Panc1 (cell line): ENCODE measurements at regions of chr6 and their contacts with region 1.

Region 1: DNA sequence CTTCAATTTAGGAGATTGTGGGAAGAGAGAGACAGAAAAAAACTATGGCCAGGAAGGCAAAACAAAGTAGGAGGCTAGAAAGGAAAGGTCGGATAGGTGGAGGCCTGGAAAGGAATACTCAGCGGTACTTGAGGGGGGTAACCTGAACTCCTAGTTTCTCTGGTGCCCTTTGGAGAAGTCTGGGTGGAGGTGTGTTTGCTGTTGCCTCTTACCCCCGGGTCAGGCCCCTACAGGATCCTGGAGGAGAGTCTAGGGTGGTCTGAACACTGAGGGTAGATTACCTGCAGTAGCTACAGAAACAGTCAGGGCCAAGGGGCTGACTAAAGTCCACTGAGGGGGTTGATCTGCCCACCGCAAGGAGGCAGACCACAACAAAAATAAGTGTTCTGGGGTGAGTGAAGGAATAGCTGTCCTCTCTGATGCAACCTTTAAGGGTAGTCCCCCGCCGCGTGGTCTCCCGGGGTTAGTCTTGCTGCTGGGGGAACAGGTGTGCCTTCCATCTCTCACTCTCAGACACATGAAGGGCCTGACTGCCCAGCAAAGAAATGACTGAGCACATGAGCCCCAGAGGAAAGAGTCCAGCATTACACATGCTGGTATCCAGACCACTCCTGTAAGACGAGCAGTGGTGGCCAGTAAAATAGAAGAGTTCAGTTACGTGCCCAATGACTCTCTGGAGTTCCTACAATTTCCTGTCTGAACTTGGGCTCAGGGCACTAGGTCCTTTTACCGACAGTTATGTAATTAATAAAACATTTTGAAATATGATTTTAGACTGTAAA is 59.5 kb downstream of the MTHFD1L start:
- DNase-seq: no peak
- ATAC-seq: no peak; the same call in 1 of the 2 replicates
- H3K4me3 ChIP-seq: no peak overlapping the region
- H3K27ac ChIP-seq: no peak overlapping the region
- H3K4me1 ChIP-seq: no peaks in the 10 kb centered on the region
- H3K27me3 ChIP-seq: no peaks in the 10 kb centered on the region
- CTCF ChIP-seq: no peak

Region 2: DNA sequence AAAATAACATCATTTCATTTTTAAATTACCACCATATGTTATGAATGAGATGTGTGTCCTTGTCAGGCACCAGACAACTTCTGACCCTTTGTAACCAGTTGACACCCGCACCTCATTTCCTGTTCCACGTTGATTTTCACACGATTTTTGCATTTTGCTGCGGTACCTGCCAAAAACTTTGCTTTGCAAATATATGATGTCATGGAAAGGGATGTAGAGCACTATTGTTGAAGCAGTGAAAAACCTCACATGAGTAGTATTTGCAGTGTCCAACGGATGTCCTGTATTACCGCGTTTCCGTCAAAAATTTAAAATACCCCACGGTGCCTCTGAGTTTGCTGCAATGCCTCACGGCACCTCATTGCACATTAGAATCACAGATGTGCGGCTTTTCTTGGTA is 56.1 kb after region 1 on chr6:
- CTCF ChIA-PET with region 1: no interaction called
- POLR2A ChIA-PET with region 1: no interaction called
- in situ Hi-C with region 1: no loop called
- intact Hi-C with region 1: no loop called
- DNase-seq: no peak
- ATAC-seq: no peak
- H3K4me3 ChIP-seq: no peak overlapping the region
- H3K27ac ChIP-seq: no peak overlapping the region
- H3K4me1 ChIP-seq: no peaks in the 10 kb centered on the region
- H3K27me3 ChIP-seq: no peaks in the 10 kb centered on the region
- CTCF ChIP-seq: no peak

Region 3: DNA sequence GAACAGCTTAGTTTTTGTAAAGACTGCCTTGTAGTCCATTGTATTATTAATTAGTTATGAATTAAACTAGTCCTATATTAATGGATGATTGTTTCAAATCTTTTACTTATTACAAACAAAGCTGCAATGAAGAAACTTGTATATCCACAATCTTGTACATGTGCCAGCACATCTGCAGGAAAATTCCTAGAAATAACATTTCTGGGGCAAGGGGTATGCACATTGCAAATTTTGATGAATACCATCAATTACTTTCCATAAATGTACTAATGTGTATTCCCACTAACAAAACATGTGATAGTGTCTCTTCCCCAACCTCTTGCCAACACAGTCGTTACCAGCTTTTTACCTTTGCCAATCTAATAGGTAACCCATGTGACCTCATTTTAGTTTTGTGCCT is 241.2 kb after region 1 on chr6:
- CTCF ChIA-PET with region 1: no interaction called
- POLR2A ChIA-PET with region 1: no interaction called
- in situ Hi-C with region 1: no loop called
- intact Hi-C with region 1: no loop called
- DNase-seq: no peak
- ATAC-seq: no peak
- H3K4me3 ChIP-seq: no peak overlapping the region
- H3K27ac ChIP-seq: no peak overlapping the region
- H3K4me1 ChIP-seq: no peaks in the 10 kb centered on the region
- H3K27me3 ChIP-seq: no peaks in the 10 kb centered on the region
- CTCF ChIP-seq: no peak

Region 4: GRCh38 chr6:151280859-151281258 is 355.9 kb after region 1 on chr6:
- CTCF ChIA-PET with region 1: no interaction called
- POLR2A ChIA-PET with region 1: interaction called, 11 read pairs
- in situ Hi-C with region 1: no loop called
- intact Hi-C with region 1: no loop called
- DNase-seq: no peak
- ATAC-seq: no peak
- H3K4me3 ChIP-seq: no peak overlapping the region
- H3K27ac ChIP-seq: no peak overlapping the region
- H3K4me1 ChIP-seq: peaks cover 10% of the 10 kb centered on the region; the same call in 1 of the 2 replicates
- H3K27me3 ChIP-seq: no peaks in the 10 kb centered on the region
- CTCF ChIP-seq: no peak